ENCODE measurements at regions of chr1 and their contacts with region 1.

Region 1: DNA sequence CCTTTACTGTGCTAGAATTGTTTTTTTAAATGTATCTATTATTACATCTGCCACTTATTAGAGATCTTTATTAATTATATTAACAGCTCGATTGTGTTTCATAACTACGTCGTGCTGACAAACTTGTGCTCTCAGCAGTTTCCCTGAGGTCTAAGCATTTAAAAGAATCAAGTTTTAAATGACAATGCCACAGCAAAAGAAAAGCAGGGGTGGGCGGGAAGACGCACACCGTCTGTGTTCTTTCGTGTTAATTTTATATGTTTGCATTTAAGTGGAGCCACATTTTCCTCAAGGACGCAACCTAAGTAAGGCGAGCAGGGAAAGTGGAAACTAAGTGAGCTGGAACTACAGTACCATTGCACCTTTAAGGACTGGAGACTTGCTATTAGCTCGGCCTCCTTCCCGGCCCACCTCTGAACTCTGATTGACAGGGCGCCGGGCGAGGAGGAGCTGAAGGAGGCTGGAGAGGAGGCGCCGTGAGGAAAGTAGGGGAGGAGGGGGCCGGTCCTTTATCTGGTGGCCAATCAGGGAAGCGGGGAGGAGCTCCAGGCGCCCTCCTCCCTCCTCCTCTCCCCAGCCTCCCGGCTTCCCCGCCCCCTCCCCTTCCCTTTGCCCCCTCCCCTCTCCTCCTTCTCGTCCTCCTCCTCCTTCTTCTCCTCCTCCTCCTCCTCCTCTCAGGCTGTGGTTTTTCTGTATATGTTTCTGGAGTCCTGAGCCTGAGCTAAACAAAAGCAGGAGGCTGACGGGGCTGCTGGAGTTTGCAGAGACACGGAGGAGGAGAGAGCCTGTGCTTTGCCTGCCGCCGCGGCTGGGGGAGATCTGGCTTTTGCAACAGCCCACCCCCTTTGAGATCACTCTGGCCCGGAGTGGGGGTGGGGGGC is at the start of gene PBX1:
- DNase-seq: peak; percentile 100
- H3K4me3 ChIP-seq: peak within 1 kb of the TSS; percentile 67 to 90 (median 84)
- H3K27ac ChIP-seq: peak within 1 kb of the TSS; percentile 82 to 94 (median 88)
- H3K4me1 ChIP-seq: peaks cover 0 to 8% (median 3%) of the 10 kb centered on the region in 4 donors
- H3K27me3 ChIP-seq: no peaks in the 10 kb centered on the region
- CTCF ChIP-seq: no peak
- EP300 ChIP-seq: no peak
- POLR2A ChIP-seq: peak; percentile 66 to 82
- total RNA-seq, gene PBX1: 118 to 168 (median 161) TPM

Region 2: DNA sequence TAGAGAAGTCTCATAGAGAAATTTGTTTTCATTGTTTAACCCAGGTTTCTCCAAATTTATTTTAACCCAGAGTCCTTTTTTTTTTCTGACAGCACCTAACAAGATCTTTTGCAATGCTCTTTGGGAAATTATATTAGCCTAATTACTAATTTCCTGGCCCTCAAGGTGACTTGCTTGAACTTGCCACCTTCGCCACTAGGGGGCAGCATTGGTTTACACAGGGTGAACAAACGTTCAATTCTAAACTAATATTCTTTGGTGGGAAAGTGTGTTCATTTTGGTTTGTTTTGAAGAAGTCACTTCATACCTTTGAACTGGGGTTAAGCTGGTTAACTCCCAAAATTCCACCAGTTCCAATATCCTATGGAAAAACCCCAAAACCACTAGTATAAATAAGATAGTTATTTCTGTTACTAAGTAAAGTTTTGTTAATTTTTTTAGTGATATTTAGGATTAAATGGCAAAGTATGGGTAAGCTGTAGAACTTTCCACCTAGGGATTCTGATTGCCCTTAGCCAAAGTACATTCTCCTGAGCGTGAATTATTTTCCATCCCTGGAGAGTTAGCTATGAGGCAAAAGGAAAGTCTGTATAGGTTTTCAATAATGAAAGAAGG is 1710.8 kb before region 1 on chr1:
- intact Hi-C with region 1: no loop called
- DNase-seq: peak; percentile 84
- H3K4me3 ChIP-seq: no peak overlapping the region
- H3K27ac ChIP-seq: no peak overlapping the region
- H3K4me1 ChIP-seq: no peaks in the 10 kb centered on the region
- H3K27me3 ChIP-seq: no peaks in the 10 kb centered on the region
- CTCF ChIP-seq: peak; percentile 67 to 95 (median 76)
- EP300 ChIP-seq: no peak
- POLR2A ChIP-seq: no peak

Region 3: DNA sequence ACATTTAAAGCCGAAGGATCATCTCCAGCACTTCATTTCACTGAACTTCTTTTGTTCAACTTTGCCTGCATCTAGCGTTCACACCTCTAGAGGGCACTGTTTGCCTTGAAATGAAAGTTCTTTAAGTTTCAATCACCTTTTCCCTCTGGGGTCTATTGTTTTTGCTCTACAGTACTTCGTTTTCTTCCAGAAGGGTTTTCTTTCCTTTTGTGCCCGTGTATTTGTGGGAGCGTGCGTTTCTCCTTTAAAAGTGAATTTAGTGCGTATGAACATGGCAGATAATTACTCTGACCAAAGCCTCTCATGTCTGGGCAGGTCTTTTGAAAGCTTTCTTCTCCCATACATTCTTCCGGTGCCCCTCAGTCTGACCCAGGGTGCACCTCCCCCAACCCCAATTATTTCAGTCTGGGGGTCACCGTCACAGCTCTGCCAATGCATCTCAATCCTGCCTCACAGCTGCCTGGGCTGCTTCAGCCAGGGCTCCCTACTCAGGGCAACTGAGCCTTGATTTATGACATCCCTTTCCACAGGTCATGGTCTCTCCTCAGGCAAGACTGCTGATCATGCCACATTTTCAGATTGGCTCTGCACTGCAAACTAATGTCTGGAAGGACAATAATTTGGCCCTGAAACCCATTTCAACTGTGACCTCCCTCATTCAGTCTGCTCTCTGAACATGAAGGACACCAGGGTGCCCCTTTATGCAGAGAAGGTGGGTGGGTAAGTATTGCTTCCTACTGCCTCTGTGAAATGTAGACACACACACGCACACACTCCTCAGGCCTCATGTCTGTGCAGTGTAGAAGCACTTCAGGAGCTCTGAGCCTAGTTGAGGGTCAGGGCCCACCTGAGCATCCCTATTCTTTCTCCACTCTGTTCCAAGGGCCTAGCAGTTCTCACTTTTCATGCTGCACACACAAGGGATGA is 1148.4 kb before region 1 on chr1:
- intact Hi-C with region 1: loop called (anchors 10 kb)
- DNase-seq: no peak
- H3K4me3 ChIP-seq: no peak overlapping the region
- H3K27ac ChIP-seq: no peak overlapping the region
- H3K4me1 ChIP-seq: peaks cover 0 to 39% (median 18%) of the 10 kb centered on the region in 4 donors
- H3K27me3 ChIP-seq: no peaks in the 10 kb centered on the region
- CTCF ChIP-seq: peak; percentile 65 to 82 (median 76)
- EP300 ChIP-seq: no peak
- POLR2A ChIP-seq: no peak

Region 4: GRCh38 chr1:163535807-163536206 is 1022.9 kb before region 1 on chr1:
- intact Hi-C with region 1: loop called (anchors 10 kb)
- DNase-seq: no peak
- H3K4me3 ChIP-seq: no peak overlapping the region
- H3K27ac ChIP-seq: no peak overlapping the region
- H3K4me1 ChIP-seq: peaks cover 0 to 22% (median 20%) of the 10 kb centered on the region in 4 donors
- H3K27me3 ChIP-seq: no peaks in the 10 kb centered on the region
- CTCF ChIP-seq: peak in 3 of 4 experiments; percentile 6 to 29 (median 10)
- EP300 ChIP-seq: no peak
- POLR2A ChIP-seq: no peak

Region 5: GRCh38 chr1:164296172-164296571 is 262.5 kb before region 1 on chr1:
- intact Hi-C with region 1: loop called (anchors 5 kb)
- DNase-seq: peak; percentile 91
- H3K4me3 ChIP-seq: peak overlapping the region in 3 of 4 donors; percentile 19 to 36 (median 30)
- H3K27ac ChIP-seq: peak overlapping the region; percentile 62 to 82 (median 81)
- H3K4me1 ChIP-seq: peaks cover 0 to 16% (median 13%) of the 10 kb centered on the region in 4 donors
- H3K27me3 ChIP-seq: no peaks in the 10 kb centered on the region
- CTCF ChIP-seq: no peak
- EP300 ChIP-seq: peak; percentile 23 to 62 (median 44)
- POLR2A ChIP-seq: no peak

Region 6: DNA sequence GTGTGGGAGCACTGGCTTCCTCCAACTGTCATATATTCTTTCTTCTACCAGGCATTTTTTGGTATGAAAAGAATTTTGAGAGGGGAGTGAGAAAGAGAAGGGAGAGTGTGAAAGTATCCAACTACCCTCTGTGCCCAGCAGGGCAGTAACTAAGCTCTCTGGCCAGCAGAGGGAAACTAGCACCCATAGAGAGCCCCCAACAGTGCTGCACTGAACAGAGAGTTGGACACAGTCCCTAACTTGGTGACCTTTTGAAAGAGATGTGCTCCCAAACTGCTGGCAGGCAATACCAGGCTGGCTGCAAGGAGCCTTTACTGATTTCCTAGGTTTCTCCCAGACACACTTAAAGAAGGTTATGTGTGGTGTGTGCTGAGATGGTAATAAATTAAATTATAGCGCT is 118.5 kb before region 1 on chr1:
- intact Hi-C with region 1: loop called (anchors 5 kb)
- DNase-seq: peak; percentile 62
- H3K4me3 ChIP-seq: no peak overlapping the region
- H3K27ac ChIP-seq: no peak overlapping the region
- H3K4me1 ChIP-seq: peaks cover 0 to 12% (median 10%) of the 10 kb centered on the region in 4 donors
- H3K27me3 ChIP-seq: no peaks in the 10 kb centered on the region
- CTCF ChIP-seq: peak; percentile 32 to 38 (median 37)
- EP300 ChIP-seq: no peak
- POLR2A ChIP-seq: no peak

Region 7: GRCh38 chr1:164637461-164638375 is 79.0 kb after region 1 on chr1:
- intact Hi-C with region 1: loop called (anchors 5 kb)
- DNase-seq: peak; percentile 87
- H3K4me3 ChIP-seq: no peak overlapping the region
- H3K27ac ChIP-seq: peak overlapping the region; percentile 76 to 86 (median 80)
- H3K4me1 ChIP-seq: peaks cover 0 to 92% (median 86%) of the 10 kb centered on the region in 4 donors
- H3K27me3 ChIP-seq: no peaks in the 10 kb centered on the region
- CTCF ChIP-seq: no peak
- EP300 ChIP-seq: peak in 1 of 4 donors; percentile 18
- POLR2A ChIP-seq: no peak

Region 8: GRCh38 chr1:164707868-164708331 is 149.2 kb after region 1 on chr1:
- intact Hi-C with region 1: loop called (anchors 5 kb)
- DNase-seq: peak; percentile 79
- H3K4me3 ChIP-seq: peak overlapping the region in 1 of 4 donors; percentile 0
- H3K27ac ChIP-seq: peak overlapping the region; percentile 77 to 87 (median 80)
- H3K4me1 ChIP-seq: peaks cover 0 to 96% (median 88%) of the 10 kb centered on the region in 4 donors
- H3K27me3 ChIP-seq: no peaks in the 10 kb centered on the region
- CTCF ChIP-seq: no peak
- EP300 ChIP-seq: no peak
- POLR2A ChIP-seq: no peak

Region 9: DNA sequence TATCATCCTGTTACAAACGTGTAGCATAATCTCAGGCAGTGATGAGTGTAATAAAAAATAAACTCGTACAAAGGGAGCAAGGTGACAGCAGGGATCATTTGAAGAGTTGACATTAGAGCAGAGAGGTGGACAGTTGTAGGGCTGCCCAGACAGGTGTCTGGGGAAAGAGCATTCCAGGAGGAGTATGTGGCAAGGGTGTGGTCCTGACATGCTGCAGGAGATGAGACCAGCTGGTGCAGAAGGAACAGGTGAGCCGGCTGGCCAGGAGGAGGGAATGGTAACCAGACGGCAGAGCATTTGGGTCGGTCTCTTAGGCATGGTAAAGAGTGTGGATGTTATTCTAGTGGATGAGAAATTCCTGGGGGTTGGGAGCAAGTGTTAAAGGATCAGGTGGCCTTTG is 491.5 kb after region 1 on chr1:
- intact Hi-C with region 1: no loop called
- DNase-seq: no peak
- H3K4me3 ChIP-seq: no peak overlapping the region
- H3K27ac ChIP-seq: no peak overlapping the region
- H3K4me1 ChIP-seq: no peaks in the 10 kb centered on the region
- H3K27me3 ChIP-seq: no peaks in the 10 kb centered on the region
- CTCF ChIP-seq: no peak
- EP300 ChIP-seq: no peak
- POLR2A ChIP-seq: no peak

Measured in sigmoid colon (tissue), 7 donors.